ENCODE measurements at regions of chr17 and their contacts with region 1.

Region 1: DNA sequence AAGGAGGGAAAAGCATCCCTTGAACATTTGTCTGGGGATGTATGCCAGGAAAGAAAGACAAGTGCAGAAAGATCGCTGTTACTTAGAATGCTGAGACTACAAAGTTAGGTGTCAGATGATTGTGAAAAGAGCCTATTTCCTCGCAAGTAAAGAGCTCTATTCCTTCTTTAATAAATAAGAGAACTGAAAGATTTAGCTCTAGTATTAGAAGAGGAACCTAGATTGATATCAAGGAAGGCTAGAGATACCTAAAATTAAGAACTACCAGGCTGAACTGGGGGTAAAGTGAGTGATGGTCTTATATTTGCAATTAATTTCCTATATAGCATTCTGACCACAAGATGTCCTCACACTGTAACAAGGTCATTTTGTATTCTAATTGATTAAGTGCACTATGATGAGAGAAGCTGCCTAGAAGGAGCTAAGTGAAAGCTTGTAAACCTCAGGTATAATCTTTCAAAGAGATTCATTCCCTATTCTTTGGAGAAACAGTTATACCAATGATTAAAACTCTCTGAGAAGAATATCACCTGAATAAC is 62.3 kb downstream of the SSH2 start:
- H3K4me3 Mint-ChIP-seq: peak overlapping the region; percentile 42
- H3K27ac Mint-ChIP-seq: peak overlapping the region; percentile 72
- H3K4me1 Mint-ChIP-seq: peaks cover 41% of the 10 kb centered on the region
- H3K27me3 Mint-ChIP-seq: no peaks in the 10 kb centered on the region

Region 2: GRCh38 chr17:29807520-29808351 is 60.0 kb before region 1 on chr17:
- intact Hi-C with region 1: no loop called
- H3K4me3 Mint-ChIP-seq: peak overlapping the region; percentile 73
- H3K27ac Mint-ChIP-seq: peak overlapping the region; percentile 85
- H3K4me1 Mint-ChIP-seq: peaks cover 13% of the 10 kb centered on the region
- H3K27me3 Mint-ChIP-seq: no peaks in the 10 kb centered on the region

Region 3: DNA sequence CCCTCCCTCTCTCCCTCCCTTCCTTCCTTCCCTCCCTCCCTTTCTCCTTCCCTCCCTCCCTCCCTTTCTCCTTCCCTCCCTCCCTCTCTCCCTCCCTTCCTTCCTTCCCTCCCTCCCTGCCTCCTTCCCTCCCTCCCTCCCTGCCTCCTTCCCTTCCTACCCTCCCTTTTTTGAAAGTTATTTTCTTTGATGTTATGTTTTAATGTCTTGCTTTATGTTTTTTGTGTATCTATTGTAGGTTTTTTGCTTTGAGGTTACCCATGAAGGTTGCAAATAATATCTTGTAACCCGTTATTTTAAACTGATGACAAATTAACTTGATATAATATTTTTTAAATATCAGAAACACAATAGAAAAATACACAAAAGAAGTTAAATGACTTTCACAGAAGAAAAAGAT is 33.9 kb before region 1 on chr17:
- intact Hi-C with region 1: loop called (anchors 5 kb)
- H3K4me3 Mint-ChIP-seq: no peak overlapping the region
- H3K27ac Mint-ChIP-seq: no peak overlapping the region
- H3K4me1 Mint-ChIP-seq: peaks cover 25% of the 10 kb centered on the region
- H3K27me3 Mint-ChIP-seq: no peaks in the 10 kb centered on the region

Measured in dendritic cell treated with granulocyte-macrophage colony-stimulating factor and Interleukin-4, amounts not matched to agents 40 ng/mL and 50 ng/mL, for 4 days (primary cell).